GM12878 (cell line): ENCODE measurements at regions of chr14 and their contacts with region 1.

Region 1: DNA sequence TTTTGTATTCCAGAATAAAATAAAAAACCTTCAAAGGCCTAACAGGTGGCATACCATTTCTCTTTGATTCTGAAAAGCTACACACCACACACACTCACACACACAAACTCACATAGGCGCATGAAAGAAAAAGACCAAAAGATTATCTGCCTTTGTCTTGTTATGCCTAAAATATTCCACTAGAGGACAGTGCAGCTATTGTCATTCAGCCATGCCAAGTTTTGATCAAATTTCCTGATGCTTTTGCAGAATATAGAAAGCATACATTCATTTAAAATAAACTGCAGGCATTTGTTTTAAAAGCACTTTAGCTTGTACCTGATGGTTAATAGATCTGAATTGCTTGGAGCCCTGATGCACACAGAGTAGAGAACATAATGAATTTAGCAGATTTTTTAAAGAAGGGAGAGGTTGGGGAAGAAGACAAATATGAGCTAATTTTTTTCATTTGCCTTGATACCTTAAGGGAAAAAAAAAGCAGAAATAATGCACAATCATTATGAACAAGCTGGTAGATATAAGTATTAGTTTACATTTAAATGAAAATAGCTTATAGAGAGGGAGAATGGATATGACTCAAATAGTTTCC is 1766.9 kb upstream of the SEL1L start:
- DNase-seq: no peak
- ATAC-seq: peak; percentile 69
- H3K4me3 ChIP-seq: no peak overlapping the region
- H3K27ac ChIP-seq: no peak overlapping the region
- H3K4me1 ChIP-seq: no peaks in the 10 kb centered on the region
- H3K27me3 ChIP-seq: no peaks in the 10 kb centered on the region
- CTCF ChIP-seq: peak; percentile 64 to 81 (median 80)
- EP300 ChIP-seq: no peak
- POLR2A ChIP-seq: no peak
- RAD21 ChIP-seq: peak; percentile 87

Region 2: GRCh38 chr14:83312511-83312910 is 11.9 kb after region 1 on chr14:
- CTCF ChIA-PET with region 1: interaction called, 12 read pairs
- POLR2A ChIA-PET with region 1: no interaction called
- RAD21 ChIA-PET with region 1: no interaction called
- SMC1A ChIA-PET with region 1: interaction called, 3 read pairs
- in situ Hi-C with region 1: no loop called
- intact Hi-C with region 1: no loop called
- DNase-seq: no peak
- ATAC-seq: no peak
- H3K4me3 ChIP-seq: no peak overlapping the region
- H3K27ac ChIP-seq: no peak overlapping the region
- H3K4me1 ChIP-seq: no peaks in the 10 kb centered on the region
- H3K27me3 ChIP-seq: no peaks in the 10 kb centered on the region
- CTCF ChIP-seq: no peak
- EP300 ChIP-seq: no peak
- POLR2A ChIP-seq: no peak
- RAD21 ChIP-seq: no peak

Region 3: GRCh38 chr14:83463500-83464098 is 163.0 kb after region 1 on chr14:
- CTCF ChIA-PET with region 1: interaction called, 38 read pairs
- POLR2A ChIA-PET with region 1: no interaction called
- RAD21 ChIA-PET with region 1: interaction called, 8 read pairs
- SMC1A ChIA-PET with region 1: interaction called, 20 read pairs
- in situ Hi-C with region 1: no loop called
- intact Hi-C with region 1: loop called (anchors 1 kb)
- DNase-seq: no peak
- ATAC-seq: peak; percentile 89
- H3K4me3 ChIP-seq: no peak overlapping the region
- H3K27ac ChIP-seq: no peak overlapping the region
- H3K4me1 ChIP-seq: no peaks in the 10 kb centered on the region
- H3K27me3 ChIP-seq: no peaks in the 10 kb centered on the region
- CTCF ChIP-seq: peak; percentile 45 to 62 (median 53)
- EP300 ChIP-seq: no peak
- POLR2A ChIP-seq: no peak
- RAD21 ChIP-seq: peak; percentile 53